ENCODE measurements at regions of chr3 and their contacts with region 1.

Region 1: GRCh38 chr3:168197162-168197561 is 101.4 kb upstream of the GOLIM4 start:
- DNase-seq: no peak
- ATAC-seq: no peak
- H3K4me3 ChIP-seq: no peak overlapping the region
- H3K27ac ChIP-seq: no peak overlapping the region
- H3K4me1 ChIP-seq: no peaks in the 10 kb centered on the region
- H3K27me3 ChIP-seq: peaks cover 0 to 2% (median 0%) of the 10 kb centered on the region in 3 donors
- CTCF ChIP-seq: no peak

Region 2: DNA sequence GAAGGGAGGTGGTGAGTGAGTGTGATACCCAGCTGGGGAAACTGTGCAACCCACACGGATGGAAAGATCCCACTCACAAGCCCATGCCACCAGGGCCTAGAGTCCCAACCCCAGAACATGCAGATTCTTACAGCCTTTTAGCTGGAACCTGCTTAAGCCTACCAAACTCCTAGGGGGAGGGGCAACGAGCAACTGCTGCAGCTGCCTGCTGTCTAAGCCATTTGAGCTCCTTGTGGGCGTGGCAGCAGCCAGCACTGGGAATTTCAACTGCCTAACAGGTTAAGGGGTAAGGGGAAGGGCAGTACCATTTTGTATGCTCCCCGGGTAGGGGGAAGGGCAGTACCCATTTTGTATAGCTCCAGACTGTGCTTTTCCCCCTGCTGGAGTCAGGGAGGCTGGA is 1686.8 kb before region 1 on chr3:
- intact Hi-C with region 1: loop called in 1 of 2 experiments (anchors 10 kb)
- DNase-seq: no peak
- ATAC-seq: no peak
- H3K4me3 ChIP-seq: no peak overlapping the region
- H3K27ac ChIP-seq: no peak overlapping the region
- H3K4me1 ChIP-seq: no peaks in the 10 kb centered on the region
- H3K27me3 ChIP-seq: no peaks in the 10 kb centered on the region
- CTCF ChIP-seq: no peak

Region 3: DNA sequence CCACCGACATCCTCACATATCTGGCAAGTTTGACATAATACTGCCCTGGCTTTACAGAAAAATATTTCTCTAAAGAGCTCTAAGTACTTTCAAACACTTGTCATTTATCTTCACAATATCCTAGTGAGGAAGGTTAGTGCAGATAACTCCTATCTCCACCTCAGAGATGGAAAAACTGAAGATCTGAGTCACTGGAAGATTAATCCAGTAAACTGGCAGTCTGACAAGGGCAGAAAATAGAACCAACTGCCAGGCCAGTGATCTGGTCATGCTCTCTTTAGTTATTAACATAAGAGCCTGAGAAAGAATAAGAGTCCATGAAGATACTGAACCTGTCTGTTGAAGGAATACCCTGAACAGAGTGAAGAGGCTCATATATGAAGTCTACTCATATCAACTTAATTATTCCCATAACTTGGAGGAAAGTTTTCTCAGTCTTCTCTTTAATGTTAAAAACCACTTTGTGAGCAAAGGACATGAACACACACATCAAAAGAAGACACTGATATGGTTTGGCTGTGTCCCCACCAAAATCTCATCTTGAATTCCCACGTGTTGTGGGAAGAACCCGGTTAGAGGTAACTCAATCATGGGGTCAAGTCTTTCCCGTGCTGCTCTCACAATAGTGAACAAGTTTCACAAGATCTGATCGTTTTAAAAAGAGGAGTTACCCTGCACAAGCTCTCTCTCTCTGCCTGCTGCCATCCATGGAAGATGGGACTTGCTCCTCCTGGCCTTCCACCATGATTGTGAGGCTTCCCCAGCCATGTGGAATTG is 162.8 kb before region 1 on chr3:
- intact Hi-C with region 1: no loop called
- DNase-seq: no peak
- ATAC-seq: peak; percentile 84 to 97 (median 91)
- H3K4me3 ChIP-seq: no peak overlapping the region
- H3K27ac ChIP-seq: peak overlapping the region; percentile 76
- H3K4me1 ChIP-seq: peaks cover 12% of the 10 kb centered on the region
- H3K27me3 ChIP-seq: no peaks in the 10 kb centered on the region
- CTCF ChIP-seq: no peak

Region 4: GRCh38 chr3:168047190-168047795 is 149.9 kb before region 1 on chr3:
- intact Hi-C with region 1: no loop called
- DNase-seq: no peak
- ATAC-seq: peak; percentile 73 to 84 (median 80)
- H3K4me3 ChIP-seq: no peak overlapping the region
- H3K27ac ChIP-seq: no peak overlapping the region
- H3K4me1 ChIP-seq: peaks cover 24% of the 10 kb centered on the region
- H3K27me3 ChIP-seq: no peaks in the 10 kb centered on the region
- CTCF ChIP-seq: peak; percentile 87

Region 5: GRCh38 chr3:169195672-169196071 is 998.5 kb after region 1 on chr3:
- intact Hi-C with region 1: no loop called
- DNase-seq: no peak
- ATAC-seq: no peak
- H3K4me3 ChIP-seq: no peak overlapping the region
- H3K27ac ChIP-seq: no peak overlapping the region
- H3K4me1 ChIP-seq: no peaks in the 10 kb centered on the region
- H3K27me3 ChIP-seq: no peaks in the 10 kb centered on the region
- CTCF ChIP-seq: no peak

Measured in psoas muscle (tissue), 8 donors.